Activated B cell treated with CpG ODN at 0.5 μM for 24 hours (primary cell): ENCODE measurements at regions of chrX and their contacts with region 1.

Region 1: GRCh38 chrX:20066968-20067708 is 49.6 kb downstream of the MAP7D2 start:
- DNase-seq: no peak
- ATAC-seq: peak; percentile 76
- H3K4me3 Mint-ChIP-seq: no peak overlapping the region
- H3K27ac Mint-ChIP-seq: no peak overlapping the region
- H3K4me1 Mint-ChIP-seq: peaks cover 3% of the 10 kb centered on the region
- H3K27me3 Mint-ChIP-seq: peaks cover 3% of the 10 kb centered on the region
- CTCF ChIP-seq: no peak

Region 2: GRCh38 chrX:19372170-19372546 is 695.0 kb before region 1 on chrX:
- CTCF ChIA-PET with region 1: interaction called, 8 read pairs
- POLR2A ChIA-PET with region 1: no interaction called
- intact Hi-C with region 1: loop called (anchors 1 kb)
- DNase-seq: peak; percentile 47
- ATAC-seq: peak; percentile 77
- H3K4me3 Mint-ChIP-seq: peak overlapping the region; percentile 85
- H3K27ac Mint-ChIP-seq: no peak overlapping the region
- H3K4me1 Mint-ChIP-seq: peaks cover 7% of the 10 kb centered on the region
- H3K27me3 Mint-ChIP-seq: no peaks in the 10 kb centered on the region
- CTCF ChIP-seq: no peak

Region 3: DNA sequence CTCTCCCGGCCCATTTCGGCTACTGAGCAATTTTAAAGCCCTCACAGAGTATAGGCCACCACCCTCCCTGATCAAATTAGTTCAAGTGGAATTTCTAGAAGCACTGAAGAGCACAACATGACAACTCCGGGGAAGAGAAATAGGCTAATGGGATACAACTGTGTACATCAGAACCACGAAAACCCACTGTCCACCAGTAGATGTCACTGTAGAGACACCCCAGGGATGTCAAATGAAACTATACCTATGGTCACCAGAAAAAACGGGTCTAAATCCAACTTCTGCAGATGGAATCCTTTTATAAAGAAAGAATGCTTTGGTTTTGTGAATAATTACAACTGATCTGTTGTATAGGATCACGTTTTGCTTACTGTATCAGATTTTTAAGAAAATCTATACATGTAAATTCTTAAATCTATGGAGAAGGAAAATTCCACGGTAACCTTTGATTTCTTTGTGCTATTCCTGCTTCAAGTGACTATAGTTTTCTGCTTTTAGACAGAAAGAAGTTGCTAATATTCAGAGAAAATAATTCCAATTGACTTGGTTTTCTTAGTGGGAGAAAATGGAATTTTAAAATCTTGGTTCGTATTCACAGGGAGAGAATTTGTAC is 522.3 kb before region 1 on chrX:
- CTCF ChIA-PET with region 1: no interaction called
- POLR2A ChIA-PET with region 1: no interaction called
- intact Hi-C with region 1: loop called (anchors 2 kb)
- DNase-seq: no peak
- ATAC-seq: peak; percentile 60
- H3K4me3 Mint-ChIP-seq: no peak overlapping the region
- H3K27ac Mint-ChIP-seq: no peak overlapping the region
- H3K4me1 Mint-ChIP-seq: no peaks in the 10 kb centered on the region
- H3K27me3 Mint-ChIP-seq: no peaks in the 10 kb centered on the region
- CTCF ChIP-seq: no peak

Region 4: DNA sequence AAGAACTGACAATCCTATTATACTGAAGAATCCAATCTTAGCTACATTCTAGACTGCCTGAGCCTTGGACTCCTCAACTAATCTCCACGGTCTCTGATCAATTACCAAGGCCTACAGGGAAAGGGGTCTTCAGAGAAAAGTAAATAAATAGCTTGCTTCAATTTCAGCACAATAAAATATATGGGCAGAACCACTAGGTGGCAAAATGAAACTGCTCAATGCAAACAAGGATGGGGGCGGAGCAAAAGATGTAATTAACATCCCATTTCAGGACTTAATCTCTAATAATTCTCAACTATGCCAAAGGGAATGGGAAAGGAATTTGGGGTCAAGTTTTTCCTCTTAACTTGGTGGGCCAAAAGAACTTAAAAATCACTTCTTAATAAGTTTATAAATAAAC is 473.4 kb before region 1 on chrX:
- CTCF ChIA-PET with region 1: no interaction called
- POLR2A ChIA-PET with region 1: no interaction called
- intact Hi-C with region 1: loop called (anchors 1 kb)
- DNase-seq: no peak
- ATAC-seq: no peak
- H3K4me3 Mint-ChIP-seq: no peak overlapping the region
- H3K27ac Mint-ChIP-seq: no peak overlapping the region
- H3K4me1 Mint-ChIP-seq: peaks cover 2% of the 10 kb centered on the region
- H3K27me3 Mint-ChIP-seq: no peaks in the 10 kb centered on the region
- CTCF ChIP-seq: no peak

Region 5: GRCh38 chrX:19629541-19629940 is 437.6 kb before region 1 on chrX:
- CTCF ChIA-PET with region 1: no interaction called
- POLR2A ChIA-PET with region 1: no interaction called
- intact Hi-C with region 1: no loop called
- DNase-seq: no peak
- ATAC-seq: no peak
- H3K4me3 Mint-ChIP-seq: no peak overlapping the region
- H3K27ac Mint-ChIP-seq: no peak overlapping the region
- H3K4me1 Mint-ChIP-seq: peaks cover 28% of the 10 kb centered on the region
- H3K27me3 Mint-ChIP-seq: no peaks in the 10 kb centered on the region
- CTCF ChIP-seq: no peak

Region 6: GRCh38 chrX:19728915-19729314 is 338.2 kb before region 1 on chrX:
- CTCF ChIA-PET with region 1: no interaction called
- POLR2A ChIA-PET with region 1: interaction called, 10 read pairs
- intact Hi-C with region 1: no loop called
- DNase-seq: no peak
- ATAC-seq: no peak
- H3K4me3 Mint-ChIP-seq: no peak overlapping the region
- H3K27ac Mint-ChIP-seq: no peak overlapping the region
- H3K4me1 Mint-ChIP-seq: peaks cover 23% of the 10 kb centered on the region
- H3K27me3 Mint-ChIP-seq: no peaks in the 10 kb centered on the region
- CTCF ChIP-seq: no peak

Region 7: DNA sequence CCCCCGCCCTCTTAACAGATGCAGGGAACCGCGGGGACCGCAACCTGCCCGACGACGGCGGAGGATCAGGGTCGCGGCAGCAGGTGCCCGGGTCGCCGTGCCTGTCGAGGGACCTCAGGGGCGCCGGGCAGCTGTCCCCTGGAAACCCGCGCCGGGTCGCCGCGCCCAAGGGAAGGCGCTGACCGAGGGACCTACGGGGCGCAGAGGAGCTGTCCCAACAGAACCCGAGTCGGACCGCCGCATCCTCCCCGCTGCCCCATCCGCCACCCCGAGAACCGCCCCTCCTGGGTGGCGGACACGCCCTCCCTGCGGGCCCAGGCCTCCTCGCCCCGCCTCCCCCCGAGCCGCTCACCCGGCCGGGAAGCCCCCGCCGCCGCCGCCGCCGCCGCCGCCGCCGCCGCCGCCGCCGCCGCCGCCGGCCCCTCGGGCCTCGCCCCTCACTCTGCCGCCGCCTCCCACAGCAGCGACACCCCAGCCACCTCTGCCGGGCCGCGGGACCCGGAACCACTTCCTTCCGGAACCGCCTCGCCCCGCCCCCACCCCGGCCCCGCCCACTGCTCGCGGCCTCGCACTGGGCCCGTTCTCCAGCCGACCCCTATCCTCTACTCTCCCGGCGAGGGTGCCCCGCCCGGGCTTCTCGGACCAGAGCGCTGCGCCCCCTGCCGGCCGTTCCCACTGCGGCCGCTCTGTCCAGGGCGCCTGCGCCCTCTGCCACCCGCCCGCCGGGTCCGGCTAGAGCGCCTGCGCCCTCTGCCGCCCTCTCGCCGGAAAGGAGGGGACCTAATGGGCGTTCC is 76.4 kb before region 1 on chrX and contains the start of gene BCLAF3:
- CTCF ChIA-PET with region 1: no interaction called
- POLR2A ChIA-PET with region 1: no interaction called
- intact Hi-C with region 1: loop called (anchors 1 kb)
- DNase-seq: peak; percentile 83
- ATAC-seq: peak; percentile 92
- H3K4me3 Mint-ChIP-seq: peak within 1 kb of the TSS; percentile 86
- H3K27ac Mint-ChIP-seq: peak within 1 kb of the TSS; percentile 85
- H3K4me1 Mint-ChIP-seq: peaks cover 16% of the 10 kb centered on the region
- H3K27me3 Mint-ChIP-seq: no peaks in the 10 kb centered on the region
- CTCF ChIP-seq: no peak
- total RNA-seq, gene BCLAF3: 11.6 and 15.3 TPM in 2 replicates

Region 8: GRCh38 chrX:20029728-20030127 is 37.4 kb before region 1 on chrX:
- CTCF ChIA-PET with region 1: no interaction called
- POLR2A ChIA-PET with region 1: no interaction called
- intact Hi-C with region 1: no loop called
- DNase-seq: no peak
- ATAC-seq: no peak
- H3K4me3 Mint-ChIP-seq: no peak overlapping the region
- H3K27ac Mint-ChIP-seq: no peak overlapping the region
- H3K4me1 Mint-ChIP-seq: no peaks in the 10 kb centered on the region
- H3K27me3 Mint-ChIP-seq: no peaks in the 10 kb centered on the region
- CTCF ChIP-seq: no peak

Region 9: GRCh38 chrX:20141281-20142220 is 74.4 kb after region 1 on chrX and contains the start of gene EIF1AX:
- CTCF ChIA-PET with region 1: no interaction called
- POLR2A ChIA-PET with region 1: no interaction called
- intact Hi-C with region 1: no loop called
- DNase-seq: peak; percentile 88
- ATAC-seq: peak; percentile 99
- H3K4me3 Mint-ChIP-seq: peak within 1 kb of the TSS; percentile 88
- H3K27ac Mint-ChIP-seq: peak within 1 kb of the TSS; percentile 83
- H3K4me1 Mint-ChIP-seq: peaks cover 23% of the 10 kb centered on the region
- H3K27me3 Mint-ChIP-seq: no peaks in the 10 kb centered on the region
- CTCF ChIP-seq: no peak
- total RNA-seq, gene EIF1AX: 58.8 and 59.4 TPM in 2 replicates